Caco-2 (cell line): ENCODE measurements at regions of chr7 and their contacts with region 1.

Region 1: GRCh38 chr7:992709-993607 is 10.0 kb downstream of the CYP2W1 start:
- DNase-seq: peak; percentile 98
- H3K4me3 ChIP-seq: no peak overlapping the region
- H3K4me3 Mint-ChIP-seq: peak overlapping the region; percentile 31
- H3K27ac Mint-ChIP-seq: peak overlapping the region; percentile 58
- H3K4me1 ChIP-seq: peaks cover 13% of the 10 kb centered on the region
- H3K4me1 Mint-ChIP-seq: no peaks in the 10 kb centered on the region
- H3K27me3 ChIP-seq: no peaks in the 10 kb centered on the region
- H3K27me3 Mint-ChIP-seq: no peaks in the 10 kb centered on the region
- CTCF ChIP-seq: peak; percentile 99 to 100

Region 2: GRCh38 chr7:974820-975681 is 17.9 kb before region 1 on chr7 and contains the start of gene COX19:
- CTCF ChIA-PET with region 1: interaction called, 33 read pairs
- POLR2A ChIA-PET with region 1: interaction called, 3 read pairs
- intact Hi-C with region 1: no loop called
- DNase-seq: peak; percentile 90 to 94
- H3K4me3 ChIP-seq: peak within 1 kb of the TSS; percentile 99
- H3K4me3 Mint-ChIP-seq: peak within 1 kb of the TSS; percentile 88
- H3K27ac Mint-ChIP-seq: peak within 1 kb of the TSS; percentile 88
- H3K4me1 ChIP-seq: peaks cover 57% of the 10 kb centered on the region
- H3K4me1 Mint-ChIP-seq: peaks cover 11% of the 10 kb centered on the region
- H3K27me3 ChIP-seq: no peaks in the 10 kb centered on the region
- H3K27me3 Mint-ChIP-seq: no peaks in the 10 kb centered on the region
- CTCF ChIP-seq: no peak
- total RNA-seq, gene COX19: 24.8 and 25.6 TPM in 2 replicates

Region 3: DNA sequence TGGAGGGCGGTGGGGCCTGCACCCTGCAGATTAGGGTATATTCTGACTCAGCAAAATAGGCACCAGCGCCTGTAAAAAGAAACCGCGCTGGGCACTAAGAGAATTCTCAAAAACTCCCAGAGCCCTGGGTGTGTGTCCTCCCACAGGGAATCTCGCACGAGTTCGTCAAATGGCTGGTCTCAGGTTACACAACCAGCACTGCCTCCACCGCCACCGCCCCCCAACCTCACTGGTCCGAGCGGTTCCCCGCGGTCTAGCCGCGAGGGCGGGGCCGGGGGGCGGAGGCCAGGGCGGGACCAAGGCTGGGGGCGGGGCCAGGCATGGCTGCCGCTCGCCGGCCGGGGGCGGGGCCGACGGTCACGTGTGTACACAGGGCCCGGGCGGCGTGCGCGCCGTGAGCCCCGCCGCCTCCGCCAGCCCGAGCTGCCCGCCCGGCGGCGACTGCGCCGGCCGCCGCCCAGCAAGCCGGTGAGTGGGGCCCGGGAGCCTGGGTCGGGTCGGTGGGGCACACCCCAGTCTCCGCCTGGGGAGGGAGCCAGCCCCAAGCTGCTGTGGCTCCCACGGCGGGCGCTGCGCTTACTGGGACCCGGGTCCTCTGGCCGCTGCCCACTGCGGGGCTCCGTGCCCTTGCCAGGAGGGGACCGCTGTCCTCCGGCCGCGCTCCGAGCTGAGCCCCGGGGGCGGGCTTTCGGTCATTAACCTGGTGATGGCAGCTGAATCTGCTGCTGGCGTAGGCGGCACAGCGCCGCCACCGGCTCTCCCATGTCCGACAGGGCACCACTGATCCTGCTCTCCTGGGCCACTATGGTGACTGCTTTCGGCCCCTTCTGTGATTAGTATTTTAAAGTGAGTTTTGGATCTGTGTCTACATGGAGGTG is 51.5 kb after region 1 on chr7 and contains the start of gene GPR146:
- CTCF ChIA-PET with region 1: interaction called, 14 read pairs
- POLR2A ChIA-PET with region 1: no interaction called
- intact Hi-C with region 1: no loop called
- DNase-seq: peak; percentile 97 to 98
- H3K4me3 ChIP-seq: peak within 1 kb of the TSS; percentile 81
- H3K4me3 Mint-ChIP-seq: peak within 1 kb of the TSS; percentile 71
- H3K27ac Mint-ChIP-seq: peak within 1 kb of the TSS; percentile 79
- H3K4me1 ChIP-seq: peaks cover 29% of the 10 kb centered on the region
- H3K4me1 Mint-ChIP-seq: peaks cover 18% of the 10 kb centered on the region
- H3K27me3 ChIP-seq: no peaks in the 10 kb centered on the region
- H3K27me3 Mint-ChIP-seq: no peaks in the 10 kb centered on the region
- CTCF ChIP-seq: peak; percentile 24 to 52
- total RNA-seq, gene GPR146: 1.8 and 3.0 TPM in 2 replicates

Region 4: DNA sequence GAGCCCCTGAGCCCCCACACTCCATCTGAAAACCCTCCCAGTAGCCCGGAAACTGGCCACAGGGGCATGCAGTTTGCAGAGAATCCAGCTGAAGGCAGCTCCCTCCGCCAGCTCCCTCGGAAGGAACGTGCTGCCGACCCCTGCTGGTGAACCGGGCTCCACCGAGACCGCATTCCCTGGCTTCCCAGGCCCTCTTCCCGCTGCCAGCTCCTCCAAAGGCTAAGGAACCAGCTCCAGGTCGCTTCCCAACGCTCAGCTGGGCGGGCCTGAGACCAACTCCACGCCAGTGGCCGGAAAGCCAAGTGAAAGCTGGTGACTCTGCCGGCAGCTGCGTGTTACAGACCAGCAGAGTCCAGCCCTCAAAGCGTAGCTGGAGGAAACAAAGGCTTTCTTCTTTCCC is 130.8 kb after region 1 on chr7:
- CTCF ChIA-PET with region 1: interaction called, 15 read pairs
- POLR2A ChIA-PET with region 1: interaction called, 4 read pairs
- intact Hi-C with region 1: no loop called
- DNase-seq: peak; percentile 39 to 42
- H3K4me3 ChIP-seq: no peak overlapping the region
- H3K4me3 Mint-ChIP-seq: no peak overlapping the region
- H3K27ac Mint-ChIP-seq: no peak overlapping the region
- H3K4me1 ChIP-seq: no peaks in the 10 kb centered on the region
- H3K4me1 Mint-ChIP-seq: no peaks in the 10 kb centered on the region
- H3K27me3 ChIP-seq: no peaks in the 10 kb centered on the region
- H3K27me3 Mint-ChIP-seq: no peaks in the 10 kb centered on the region
- CTCF ChIP-seq: peak in 1 of 2 experiments; percentile 42

Region 5: DNA sequence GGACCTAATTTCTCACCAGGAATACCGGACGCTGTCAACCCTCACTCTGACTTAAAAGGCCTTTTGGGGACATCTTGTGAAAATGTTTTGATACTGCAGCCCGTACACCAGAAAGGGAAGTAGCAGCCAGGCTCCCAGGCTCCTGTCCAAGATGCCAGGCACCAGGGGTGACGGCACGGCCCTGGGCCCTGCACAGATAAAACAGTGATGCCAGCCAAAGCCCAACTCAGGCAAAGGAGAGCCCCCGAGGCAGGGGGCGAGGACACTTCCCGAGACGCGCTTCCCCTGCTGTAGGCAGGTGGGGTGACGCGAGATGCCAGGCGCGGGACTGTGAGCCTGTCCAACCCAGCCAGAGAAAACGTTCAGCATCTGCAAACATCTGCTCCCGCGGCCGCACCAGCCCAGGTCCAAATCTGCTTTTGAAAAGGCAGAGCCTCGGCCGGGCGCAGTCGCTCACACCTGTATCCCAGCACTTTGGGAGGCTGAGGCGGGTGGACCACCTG is 151.4 kb after region 1 on chr7:
- CTCF ChIA-PET with region 1: interaction called, 20 read pairs
- POLR2A ChIA-PET with region 1: no interaction called
- intact Hi-C with region 1: no loop called
- DNase-seq: peak in 1 of 2 experiments; percentile 35
- H3K4me3 ChIP-seq: no peak overlapping the region
- H3K4me3 Mint-ChIP-seq: no peak overlapping the region
- H3K27ac Mint-ChIP-seq: no peak overlapping the region
- H3K4me1 ChIP-seq: no peaks in the 10 kb centered on the region
- H3K4me1 Mint-ChIP-seq: no peaks in the 10 kb centered on the region
- H3K27me3 ChIP-seq: no peaks in the 10 kb centered on the region
- H3K27me3 Mint-ChIP-seq: no peaks in the 10 kb centered on the region
- CTCF ChIP-seq: peak in 1 of 2 experiments; percentile 37

Region 6: GRCh38 chr7:1181640-1182039 is 188.7 kb after region 1 on chr7:
- CTCF ChIA-PET with region 1: interaction called, 24 read pairs
- POLR2A ChIA-PET with region 1: interaction called, 3 read pairs
- intact Hi-C with region 1: loop called (anchors 1 kb)
- DNase-seq: no peak
- H3K4me3 ChIP-seq: no peak overlapping the region
- H3K4me3 Mint-ChIP-seq: no peak overlapping the region
- H3K27ac Mint-ChIP-seq: no peak overlapping the region
- H3K4me1 ChIP-seq: peaks cover 2% of the 10 kb centered on the region; the same call in 1 of the 2 replicates
- H3K4me1 Mint-ChIP-seq: no peaks in the 10 kb centered on the region
- H3K27me3 ChIP-seq: no peaks in the 10 kb centered on the region
- H3K27me3 Mint-ChIP-seq: peaks cover 9% of the 10 kb centered on the region
- CTCF ChIP-seq: no peak